PC-9 (cell line): ENCODE measurements at regions of chr16 and their contacts with region 1.

Region 1: DNA sequence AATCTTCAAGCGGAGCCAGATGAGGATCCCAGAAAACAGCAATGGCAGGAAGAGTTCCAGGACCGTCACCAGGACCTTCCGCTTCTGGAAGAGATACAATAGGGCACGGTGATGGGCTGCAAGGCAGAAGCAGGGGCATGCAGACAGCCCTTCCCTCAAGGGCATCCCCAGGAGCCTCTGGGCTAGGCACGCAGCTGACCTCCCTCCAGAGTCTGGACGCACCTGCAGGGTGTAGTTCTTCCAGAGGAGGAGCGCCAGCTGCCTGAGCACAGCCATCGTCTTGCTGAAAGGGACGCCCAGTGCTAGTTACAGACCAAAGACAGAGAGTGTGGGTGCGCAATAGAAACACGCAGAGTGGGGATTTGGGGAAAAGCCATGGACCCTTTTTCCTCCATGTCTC is 14.3 kb downstream of the ABCA3 start:
- DNase-seq: no peak
- H3K4me3 ChIP-seq: no peak overlapping the region
- H3K27ac ChIP-seq: no peak overlapping the region
- H3K4me1 ChIP-seq: no peaks in the 10 kb centered on the region
- H3K27me3 ChIP-seq: peaks cover 9% of the 10 kb centered on the region; the same call in 1 of the 2 replicates
- CTCF ChIP-seq: no peak

Region 2: GRCh38 chr16:1826691-1827575 is 499.3 kb before region 1 on chr16 and contains the starts of genes FAHD1 and HAGH:
- CTCF ChIA-PET with region 1: no interaction called
- POLR2A ChIA-PET with region 1: interaction called, 19 read pairs
- intact Hi-C with region 1: no loop called
- DNase-seq: peak; percentile 80 to 96
- H3K4me3 ChIP-seq: peak within 1 kb of the TSS; percentile 74
- H3K27ac ChIP-seq: 0 out of 2 replicates have a peak within 1 kb of the TSS, but pooled peaks have one; percentile 5
- H3K4me1 ChIP-seq: peaks cover 28% of the 10 kb centered on the region
- H3K27me3 ChIP-seq: no peaks in the 10 kb centered on the region
- CTCF ChIP-seq: no peak
- total RNA-seq, gene FAHD1: 26.8 and 41.2 TPM in 2 replicates
- total RNA-seq, gene HAGH: 51.8 and 74.5 TPM in 2 replicates

Region 3: GRCh38 chr16:2371421-2371820 is 45.2 kb after region 1 on chr16:
- CTCF ChIA-PET with region 1: no interaction called
- POLR2A ChIA-PET with region 1: no interaction called
- intact Hi-C with region 1: no loop called
- DNase-seq: no peak
- H3K4me3 ChIP-seq: no peak overlapping the region
- H3K27ac ChIP-seq: no peak overlapping the region
- H3K4me1 ChIP-seq: peaks cover 7% of the 10 kb centered on the region; the same call in 1 of the 2 replicates
- H3K27me3 ChIP-seq: peaks cover 25% of the 10 kb centered on the region
- CTCF ChIP-seq: no peak

Region 4: DNA sequence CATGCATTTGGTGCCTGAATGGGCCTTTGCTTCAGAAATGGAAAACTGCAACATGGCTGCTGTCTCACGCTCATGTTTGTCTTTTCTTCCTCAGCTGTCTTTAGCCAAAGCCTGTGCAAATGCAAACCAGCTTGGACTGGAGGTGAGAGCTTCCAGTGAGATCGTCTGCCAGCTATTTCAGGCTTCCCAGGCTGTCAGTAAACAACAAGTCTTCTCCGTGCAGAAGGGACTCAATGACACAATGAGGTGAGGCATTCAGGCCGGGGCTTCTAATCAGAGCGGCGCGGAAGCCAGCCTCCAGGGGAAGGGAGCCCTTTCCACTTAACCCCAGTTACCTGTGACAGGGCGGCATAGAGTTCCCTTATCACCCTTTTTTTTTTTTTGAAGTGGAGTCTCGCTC is 117.4 kb after region 1 on chr16:
- CTCF ChIA-PET with region 1: no interaction called
- POLR2A ChIA-PET with region 1: no interaction called
- intact Hi-C with region 1: no loop called
- DNase-seq: no peak
- H3K4me3 ChIP-seq: no peak overlapping the region
- H3K27ac ChIP-seq: no peak overlapping the region
- H3K4me1 ChIP-seq: peaks cover 29% of the 10 kb centered on the region
- H3K27me3 ChIP-seq: no peaks in the 10 kb centered on the region
- CTCF ChIP-seq: no peak